Dorsolateral prefrontal cortex (tissue), 120 donors: ENCODE measurements at regions of chr10 and their contacts with region 1.

Region 1: DNA sequence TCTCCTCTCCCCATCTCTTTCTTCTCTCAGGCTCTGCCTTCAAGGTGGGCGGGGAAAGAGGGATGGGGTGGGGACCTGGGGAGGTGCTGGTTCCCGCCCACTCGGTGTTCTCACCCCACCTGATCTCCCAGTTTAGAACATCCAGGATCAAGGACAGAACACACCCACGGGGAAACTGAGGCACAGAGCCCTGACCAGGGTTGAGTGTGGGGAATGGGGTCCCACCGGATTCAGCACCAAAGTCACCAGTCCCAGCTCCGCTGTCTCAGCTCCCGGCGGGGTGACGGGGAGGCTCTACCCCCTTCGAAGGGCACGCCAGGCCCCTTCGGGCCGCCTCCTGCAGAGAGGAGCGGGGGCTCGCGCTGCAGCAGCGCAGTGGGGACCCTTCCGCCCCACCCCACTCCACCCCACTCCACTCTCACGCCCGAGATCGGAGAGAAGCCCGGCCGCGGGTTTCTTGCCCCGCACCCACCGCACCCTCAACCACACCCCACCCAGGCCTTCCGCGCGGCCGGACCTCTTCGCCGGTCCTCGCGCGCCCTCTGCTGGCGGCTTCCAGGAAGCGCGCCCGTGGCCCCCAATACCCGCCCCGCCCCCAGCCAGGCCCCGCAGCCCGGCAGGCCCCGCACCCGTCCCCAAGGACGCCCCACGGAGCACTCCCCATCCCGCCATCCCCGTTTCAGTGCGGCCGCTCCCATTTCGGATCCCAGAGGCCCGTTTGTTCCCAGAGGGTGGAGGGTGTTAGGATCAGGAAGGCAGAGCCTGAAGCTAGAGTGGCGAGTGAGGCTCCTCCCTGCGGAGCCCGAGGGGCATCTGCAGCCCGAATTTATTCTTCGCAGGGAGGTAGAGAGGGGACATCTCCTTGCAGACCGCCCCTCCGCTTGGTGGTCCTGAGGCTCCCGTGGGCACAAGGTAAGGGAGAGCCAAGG is 18.0 kb downstream of the POLL start:
- DNase-seq: peak in 9 of 10 donors; percentile 60 to 85 (median 77)
- H3K4me3 ChIP-seq: peak overlapping the region; percentile 40 to 83 (median 64)
- H3K27ac ChIP-seq: peak overlapping the region in 36 of 59 donors; percentile 0 to 81 (median 45)
- H3K27me3 ChIP-seq: peaks cover 0 to 43% (median 7%) of the 10 kb centered on the region in 45 donors
- CTCF ChIP-seq: peak; percentile 51 to 99 (median 88)

Region 2: DNA sequence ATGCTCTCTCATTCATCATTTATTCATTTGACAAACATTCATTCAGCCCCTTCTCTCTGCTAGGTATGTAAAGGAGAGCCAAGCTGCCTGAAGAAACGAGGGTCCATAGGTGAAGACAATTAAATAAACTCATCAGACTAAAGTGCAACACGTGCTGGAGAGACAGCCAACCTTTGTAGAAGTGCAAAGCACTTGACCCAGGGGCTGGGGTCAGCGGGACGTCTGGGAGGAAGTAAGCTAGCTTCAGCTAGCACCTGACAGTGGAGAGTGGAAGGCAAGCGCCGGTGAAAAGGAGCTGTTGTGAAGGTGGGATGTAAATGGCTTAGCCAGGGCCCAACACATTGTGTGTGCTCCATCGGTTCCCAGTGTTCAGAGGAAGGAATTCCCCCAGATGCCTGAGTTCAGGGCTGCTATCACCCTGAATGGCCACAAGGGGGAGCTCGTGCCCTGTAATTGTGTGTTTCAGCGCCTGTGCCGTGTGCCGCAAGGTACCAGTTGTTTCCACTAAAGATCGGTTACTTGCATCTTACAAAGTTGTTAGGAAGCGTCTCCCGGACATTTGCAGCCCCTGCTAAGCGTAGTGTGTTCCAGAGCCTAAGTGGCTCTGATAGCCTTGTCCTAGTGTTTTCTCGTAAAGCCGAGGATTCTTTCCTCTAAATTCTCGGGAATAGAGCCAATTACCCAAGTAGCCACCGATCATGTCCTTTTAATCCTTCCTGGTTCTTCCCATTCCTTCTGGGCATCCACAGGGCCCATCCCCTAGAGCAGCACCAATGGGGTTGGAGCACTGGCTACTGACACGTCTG is 408.4 kb before region 1 on chr10:
- intact Hi-C with region 1: loop called in 1 of 2 experiments (anchors 5 kb)
- DNase-seq: peak; percentile 38 to 80 (median 70)
- H3K4me3 ChIP-seq: peak overlapping the region in 54 of 59 donors; percentile 8 to 68 (median 41)
- H3K27ac ChIP-seq: no peak overlapping the region
- H3K27me3 ChIP-seq: peaks cover 0 to 80% (median 36%) of the 10 kb centered on the region in 45 donors
- CTCF ChIP-seq: peak; percentile 81 to 99 (median 96)

Region 3: GRCh38 chr10:101214446-101215396 is 355.4 kb before region 1 on chr10:
- intact Hi-C with region 1: loop called (anchors 2 kb)
- DNase-seq: peak in 9 of 10 donors; percentile 39 to 70 (median 49)
- H3K4me3 ChIP-seq: peak overlapping the region in 25 of 59 donors; percentile 5 to 52 (median 30)
- H3K27ac ChIP-seq: no peak overlapping the region
- H3K27me3 ChIP-seq: peaks cover 13 to 100% (median 89%) of the 10 kb centered on the region in 45 donors
- CTCF ChIP-seq: peak; percentile 69 to 97 (median 89)

Region 4: DNA sequence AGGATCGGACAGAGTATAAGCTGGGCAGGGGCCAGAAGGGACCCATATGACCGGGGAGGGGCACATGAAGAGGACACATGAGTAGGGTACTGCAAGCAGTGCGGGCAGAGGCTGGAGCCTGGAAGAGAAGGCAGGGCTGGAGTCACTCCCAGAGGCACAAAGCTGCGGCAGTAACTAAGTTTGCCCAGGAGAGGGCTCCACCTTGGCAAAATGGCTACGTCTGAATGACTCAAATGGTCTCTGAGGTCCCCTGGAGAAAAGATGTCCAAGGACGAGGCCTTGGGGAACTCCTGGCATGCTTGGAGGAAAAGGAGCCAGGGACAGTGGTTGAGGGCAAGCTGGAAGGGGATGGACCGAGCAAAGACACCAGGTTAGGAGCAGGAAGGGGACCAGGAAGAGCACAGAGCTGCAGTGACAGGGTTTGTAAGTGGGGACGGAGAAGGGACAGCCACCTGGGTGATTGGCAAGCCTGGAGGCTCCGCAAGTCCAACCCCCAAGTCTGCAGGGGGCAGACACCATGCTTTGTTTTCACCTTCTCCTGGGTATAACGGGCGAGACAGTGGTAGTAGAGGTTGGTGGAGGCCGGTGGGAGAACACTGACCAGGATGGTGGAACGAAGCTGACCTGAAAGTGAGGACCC is 297.8 kb before region 1 on chr10:
- intact Hi-C with region 1: loop called in 1 of 2 experiments (anchors 5 kb)
- DNase-seq: peak; percentile 52 to 80 (median 68)
- H3K4me3 ChIP-seq: no peak overlapping the region
- H3K27ac ChIP-seq: no peak overlapping the region
- H3K27me3 ChIP-seq: peaks cover 0 to 4% (median 0%) of the 10 kb centered on the region in 45 donors
- CTCF ChIP-seq: peak in 55 of 56 donors; percentile 24 to 83 (median 74)

Region 5: GRCh38 chr10:101353692-101354327 is 216.3 kb before region 1 on chr10 and contains the start of gene BTRC:
- intact Hi-C with region 1: loop called in 1 of 2 experiments (anchors 10 kb)
- DNase-seq: peak; percentile 93 to 99 (median 98)
- H3K4me3 ChIP-seq: peak within 1 kb of the TSS; percentile 53 to 100 (median 92)
- H3K27ac ChIP-seq: peak within 1 kb of the TSS; percentile 51 to 97 (median 88)
- H3K27me3 ChIP-seq: no peaks in the 10 kb centered on the region
- CTCF ChIP-seq: peak in 24 of 56 donors; percentile 4 to 54 (median 26)
- total RNA-seq, gene BTRC: 37.4 to 117 (median 71.0) TPM

Region 6: GRCh38 chr10:101938316-101939281 is 368.5 kb after region 1 on chr10:
- intact Hi-C with region 1: no loop called
- DNase-seq: no peak
- H3K4me3 ChIP-seq: no peak overlapping the region
- H3K27ac ChIP-seq: peak overlapping the region in 46 of 59 donors; percentile 1 to 77 (median 42)
- H3K27me3 ChIP-seq: no peaks in the 10 kb centered on the region
- CTCF ChIP-seq: no peak